ENCODE measurements at regions of chr12 and their contacts with region 1.

Region 1: GRCh38 chr12:38906482-38907170 is 1.2 kb upstream of the CPNE8 start:
- DNase-seq: peak; percentile 45
- ATAC-seq: peak; percentile 94
- H3K4me3 ChIP-seq: peak overlapping the region; percentile 56 to 74 (median 62)
- H3K27ac ChIP-seq: no peak overlapping the region
- H3K4me1 ChIP-seq: peaks cover 20% of the 10 kb centered on the region; the same call in 1 of the 2 replicates
- H3K27me3 ChIP-seq: 0 out of 5 replicates have a peak, but pooled peaks cover 0 to 6% of the 10 kb centered on the region in 2 experiments
- CTCF ChIP-seq: peak; percentile 95
- EP300 ChIP-seq: no peak
- POLR2A ChIP-seq: 0 out of 4 replicates have a peak, but pooled peaks of 1 of the 2 experiments have one; percentile 20
- RAD21 ChIP-seq: peak; percentile 77

Region 2: GRCh38 chr12:38138225-38139221 is 768.1 kb before region 1 on chr12:
- CTCF ChIA-PET with region 1: no interaction called
- POLR2A ChIA-PET with region 1: no interaction called
- in situ Hi-C with region 1: loop called (anchors 25 kb)
- intact Hi-C with region 1: no loop called
- DNase-seq: peak; percentile 60
- ATAC-seq: peak; percentile 93
- H3K4me3 ChIP-seq: peak overlapping the region; percentile 42 to 60 (median 53)
- H3K27ac ChIP-seq: no peak overlapping the region
- H3K4me1 ChIP-seq: no peaks in the 10 kb centered on the region
- H3K27me3 ChIP-seq: no peaks in the 10 kb centered on the region
- CTCF ChIP-seq: peak; percentile 85
- EP300 ChIP-seq: no peak
- POLR2A ChIP-seq: no peak
- RAD21 ChIP-seq: peak; percentile 40; the same call in 1 of the 2 replicates

Region 3: DNA sequence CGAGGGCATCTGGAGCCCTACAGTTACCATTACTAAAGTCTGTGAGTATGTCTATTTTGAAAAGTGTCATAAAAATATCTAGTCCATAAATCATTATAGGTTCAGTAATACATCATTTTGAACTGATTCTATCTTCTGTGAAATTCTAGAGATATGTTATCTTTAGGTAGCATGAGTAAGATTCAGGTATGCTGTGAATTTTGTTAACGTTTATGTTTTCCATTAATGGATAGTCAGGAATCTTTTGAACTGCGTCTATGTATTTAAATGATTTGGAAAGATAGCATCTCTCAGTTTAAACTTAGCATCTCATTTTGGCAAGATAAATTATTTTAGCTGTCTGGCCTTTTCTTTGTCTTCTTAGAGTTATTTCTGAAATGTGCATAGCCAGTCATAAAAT is 581.7 kb before region 1 on chr12:
- CTCF ChIA-PET with region 1: no interaction called
- POLR2A ChIA-PET with region 1: no interaction called
- in situ Hi-C with region 1: loop called (anchors 25 kb)
- intact Hi-C with region 1: loop called (anchors 10 kb)
- DNase-seq: no peak
- ATAC-seq: no peak
- H3K4me3 ChIP-seq: no peak overlapping the region
- H3K27ac ChIP-seq: no peak overlapping the region
- H3K4me1 ChIP-seq: no peaks in the 10 kb centered on the region
- H3K27me3 ChIP-seq: no peaks in the 10 kb centered on the region
- CTCF ChIP-seq: no peak
- EP300 ChIP-seq: no peak
- POLR2A ChIP-seq: no peak
- RAD21 ChIP-seq: no peak

Region 4: DNA sequence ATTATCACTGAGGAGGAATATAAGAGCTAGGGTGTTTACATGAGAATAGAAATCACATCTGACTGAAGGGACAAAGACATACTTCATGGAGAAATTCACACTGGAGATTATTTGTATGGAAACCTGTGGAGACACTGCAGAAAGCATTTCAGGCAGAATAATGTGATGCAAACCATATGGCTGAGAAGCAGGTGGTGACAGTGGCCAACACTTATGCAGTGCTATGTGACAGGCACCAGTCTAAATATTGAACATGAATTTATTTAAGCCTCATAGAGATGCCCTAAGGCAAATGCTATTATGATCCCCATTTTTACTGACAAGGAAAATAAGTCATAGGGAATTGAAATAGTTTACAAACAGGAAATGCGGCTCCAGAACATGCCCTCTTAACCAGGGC is 573.8 kb before region 1 on chr12:
- CTCF ChIA-PET with region 1: no interaction called
- POLR2A ChIA-PET with region 1: no interaction called
- in situ Hi-C with region 1: loop called (anchors 25 kb)
- intact Hi-C with region 1: loop called (anchors 10 kb)
- DNase-seq: no peak
- ATAC-seq: no peak
- H3K4me3 ChIP-seq: no peak overlapping the region
- H3K27ac ChIP-seq: no peak overlapping the region
- H3K4me1 ChIP-seq: no peaks in the 10 kb centered on the region
- H3K27me3 ChIP-seq: no peaks in the 10 kb centered on the region
- CTCF ChIP-seq: no peak
- EP300 ChIP-seq: no peak
- POLR2A ChIP-seq: no peak
- RAD21 ChIP-seq: no peak

Region 5: GRCh38 chr12:38664661-38665269 is 241.9 kb before region 1 on chr12:
- CTCF ChIA-PET with region 1: no interaction called
- POLR2A ChIA-PET with region 1: no interaction called
- in situ Hi-C with region 1: no loop called
- intact Hi-C with region 1: loop called (anchors 2 kb)
- DNase-seq: peak; percentile 16
- ATAC-seq: peak; percentile 75
- H3K4me3 ChIP-seq: no peak overlapping the region
- H3K27ac ChIP-seq: no peak overlapping the region
- H3K4me1 ChIP-seq: no peaks in the 10 kb centered on the region
- H3K27me3 ChIP-seq: no peaks in the 10 kb centered on the region
- CTCF ChIP-seq: peak; percentile 53
- EP300 ChIP-seq: no peak
- POLR2A ChIP-seq: no peak
- RAD21 ChIP-seq: no peak

Region 6: DNA sequence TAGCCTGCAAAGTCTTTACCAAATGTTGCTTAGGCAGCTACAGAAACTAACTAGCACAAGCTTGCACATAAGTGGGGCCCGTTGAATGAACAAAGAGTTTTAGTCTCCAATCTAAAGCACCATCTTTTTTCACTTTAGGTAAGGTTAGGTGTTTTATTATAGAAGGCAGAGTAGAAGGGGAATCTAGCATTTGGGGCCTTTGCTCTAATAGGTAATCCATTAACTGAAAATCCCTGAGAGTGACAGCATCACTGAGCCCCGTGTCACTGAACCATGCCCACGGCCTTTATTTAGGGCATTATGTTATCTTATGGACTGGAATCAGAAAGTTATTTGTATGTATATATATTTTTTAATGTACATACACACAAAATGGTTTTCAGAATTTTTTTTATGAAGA is 26.3 kb before region 1 on chr12:
- CTCF ChIA-PET with region 1: no interaction called
- POLR2A ChIA-PET with region 1: no interaction called
- in situ Hi-C with region 1: no loop called
- intact Hi-C with region 1: no loop called
- DNase-seq: no peak
- ATAC-seq: peak; percentile 54; the same call in 2 of the 3 replicates
- H3K4me3 ChIP-seq: no peak overlapping the region
- H3K27ac ChIP-seq: no peak overlapping the region
- H3K4me1 ChIP-seq: no peaks in the 10 kb centered on the region
- H3K27me3 ChIP-seq: no peaks in the 10 kb centered on the region
- CTCF ChIP-seq: no peak
- EP300 ChIP-seq: no peak
- POLR2A ChIP-seq: no peak
- RAD21 ChIP-seq: no peak

Region 7: GRCh38 chr12:38892090-38892786 is 14.4 kb before region 1 on chr12:
- CTCF ChIA-PET with region 1: no interaction called
- POLR2A ChIA-PET with region 1: interaction called, 15 read pairs
- in situ Hi-C with region 1: no loop called
- intact Hi-C with region 1: loop called (anchors 1 kb)
- DNase-seq: peak; percentile 92
- ATAC-seq: peak; percentile 100
- H3K4me3 ChIP-seq: 0 out of 6 replicates have a peak overlapping the region, but pooled peaks of 1 of the 3 experiments have one; percentile 11
- H3K27ac ChIP-seq: peak overlapping the region; percentile 31
- H3K4me1 ChIP-seq: peaks cover 20% of the 10 kb centered on the region
- H3K27me3 ChIP-seq: no peaks in the 10 kb centered on the region; a peak in 1 of 5 replicates
- CTCF ChIP-seq: 0 out of 2 replicates have a peak, but pooled peaks have one; percentile 5
- EP300 ChIP-seq: peak; percentile 64 to 90; a peak in 3 of 4 replicates
- POLR2A ChIP-seq: no peak
- RAD21 ChIP-seq: no peak

Region 8: GRCh38 chr12:39103552-39104165 is 197.0 kb after region 1 on chr12:
- CTCF ChIA-PET with region 1: no interaction called
- POLR2A ChIA-PET with region 1: no interaction called
- in situ Hi-C with region 1: no loop called
- intact Hi-C with region 1: loop called (anchors 5 kb)
- DNase-seq: peak; percentile 59
- ATAC-seq: peak; percentile 94
- H3K4me3 ChIP-seq: no peak overlapping the region
- H3K27ac ChIP-seq: no peak overlapping the region
- H3K4me1 ChIP-seq: no peaks in the 10 kb centered on the region
- H3K27me3 ChIP-seq: no peaks in the 10 kb centered on the region
- CTCF ChIP-seq: peak; percentile 83
- EP300 ChIP-seq: no peak
- POLR2A ChIP-seq: no peak
- RAD21 ChIP-seq: peak; percentile 51; the same call in 1 of the 2 replicates

Region 9: DNA sequence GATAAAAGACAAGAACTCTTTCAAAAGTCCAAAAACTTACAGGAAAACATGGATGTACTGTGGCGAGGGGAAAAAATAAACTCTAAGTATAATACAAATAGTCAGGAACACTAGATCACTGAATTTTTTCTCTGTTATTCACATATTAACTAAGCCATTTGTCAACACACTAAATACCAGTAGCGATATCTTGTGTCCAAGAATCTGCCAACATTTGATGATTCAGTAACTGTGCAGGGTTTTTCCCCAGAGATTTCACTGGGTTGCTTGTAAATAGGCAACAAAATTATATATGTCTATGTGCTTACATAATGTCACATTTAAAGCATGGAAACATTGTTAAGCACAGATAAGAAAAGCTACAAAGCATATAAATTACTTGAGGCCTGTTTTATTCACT is 330.4 kb after region 1 on chr12:
- CTCF ChIA-PET with region 1: no interaction called
- POLR2A ChIA-PET with region 1: no interaction called
- in situ Hi-C with region 1: no loop called
- intact Hi-C with region 1: no loop called
- DNase-seq: no peak
- ATAC-seq: no peak
- H3K4me3 ChIP-seq: no peak overlapping the region
- H3K27ac ChIP-seq: no peak overlapping the region
- H3K4me1 ChIP-seq: peaks cover 6% of the 10 kb centered on the region; the same call in 1 of the 2 replicates
- H3K27me3 ChIP-seq: no peaks in the 10 kb centered on the region
- CTCF ChIP-seq: no peak
- EP300 ChIP-seq: no peak
- POLR2A ChIP-seq: no peak
- RAD21 ChIP-seq: no peak